GM10248 (cell line): ENCODE measurements at regions of chr14 and their contacts with region 1.

Region 1: DNA sequence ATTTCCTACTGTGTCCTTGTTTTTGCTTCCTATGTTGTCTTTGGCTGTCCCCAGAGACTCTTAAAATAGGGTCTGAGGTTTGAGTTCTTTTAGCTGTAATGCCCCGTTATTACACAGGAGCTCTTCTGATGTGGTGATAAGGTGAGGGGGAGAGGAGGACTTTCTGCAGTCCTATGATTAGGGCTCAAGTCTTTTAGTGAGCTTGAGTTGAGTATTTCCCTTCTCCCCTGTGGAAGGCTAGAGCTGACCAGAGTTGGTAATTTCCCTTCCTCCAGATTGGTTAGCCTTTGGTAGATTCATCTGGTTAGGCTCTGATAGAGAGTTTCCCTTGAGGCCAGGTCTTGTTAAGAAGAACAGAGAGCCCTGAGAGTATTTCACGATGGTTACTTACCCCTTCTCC is 4.3 kb upstream of the HIF1A start:
- DNase-seq: no peak
- CTCF ChIP-seq: no peak

Region 2: DNA sequence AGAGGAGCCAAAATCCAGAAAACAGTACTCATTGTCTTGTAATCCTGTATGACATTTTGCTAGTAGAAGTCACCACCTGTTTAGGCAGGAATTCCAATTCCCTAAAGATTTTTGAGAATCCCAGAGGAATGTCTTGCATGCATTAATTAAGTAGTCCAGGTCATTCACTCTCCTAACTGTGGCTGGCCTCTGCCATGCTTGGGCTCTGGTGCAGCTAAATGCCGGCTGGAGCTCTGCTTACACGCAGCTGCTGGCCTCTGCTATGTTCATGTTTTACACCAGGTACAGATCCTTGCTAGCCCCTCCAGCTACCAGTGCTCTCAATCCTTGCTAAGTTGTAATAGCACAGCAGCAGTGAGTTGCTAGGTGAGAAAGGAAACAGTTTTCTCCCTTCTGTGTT is 12.0 kb before region 1 on chr14:
- CTCF ChIA-PET with region 1: interaction called, 12 read pairs
- POLR2A ChIA-PET with region 1: no interaction called
- DNase-seq: no peak
- CTCF ChIP-seq: no peak

Region 3: DNA sequence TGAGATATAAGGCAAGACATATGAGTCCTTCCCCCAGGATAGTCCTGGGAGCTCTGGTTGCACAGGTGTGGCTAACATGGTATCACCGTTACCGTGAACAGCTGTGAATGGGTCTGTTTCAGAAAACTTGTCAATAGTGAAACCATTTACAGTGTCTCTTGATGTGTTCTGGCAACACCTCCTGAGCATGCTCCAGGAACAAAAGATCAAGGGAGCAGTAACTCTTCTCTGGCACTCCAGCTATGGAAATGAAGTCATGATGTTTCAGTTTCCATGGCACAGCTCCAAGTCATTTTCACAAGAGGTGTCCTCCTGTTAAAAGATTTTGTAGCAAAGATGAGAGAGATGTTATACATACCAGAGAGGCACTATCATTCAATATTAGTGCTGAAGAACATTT is 325.0 kb after region 1 on chr14:
- CTCF ChIA-PET with region 1: no interaction called
- POLR2A ChIA-PET with region 1: no interaction called
- DNase-seq: no peak
- CTCF ChIP-seq: no peak